IMR-90 (cell line): ENCODE measurements at regions of chr10 and their contacts with region 1.

Region 1: DNA sequence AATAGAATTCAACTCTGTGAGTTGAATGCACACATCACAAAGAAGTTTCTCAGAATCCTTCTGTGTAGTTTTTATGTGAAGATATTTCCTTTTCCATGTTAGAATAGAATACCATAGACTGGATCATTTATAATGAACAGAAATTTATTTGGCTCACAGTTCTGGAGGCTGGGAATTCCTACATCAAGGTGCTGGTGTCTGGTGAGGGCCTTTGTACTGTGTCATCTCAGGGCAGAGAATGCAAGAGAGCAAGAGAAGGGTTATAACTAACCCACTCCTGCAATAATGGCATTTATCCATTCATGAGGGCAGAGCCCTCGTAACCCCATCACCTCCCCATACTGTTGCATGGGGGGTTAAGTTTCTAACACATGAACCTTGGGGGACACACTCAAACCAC is 18.4 kb upstream of the DIP2C start:
- DNase-seq: no peak
- ATAC-seq: no peak
- H3K4me3 ChIP-seq: no peak overlapping the region
- H3K27ac ChIP-seq: no peak overlapping the region
- H3K4me1 ChIP-seq: no peaks in the 10 kb centered on the region
- H3K27me3 ChIP-seq: peaks cover 29% of the 10 kb centered on the region
- CTCF ChIP-seq: no peak
- POLR2A ChIP-seq: no peak
- RAD21 ChIP-seq: no peak

Region 2: GRCh38 chr10:561721-562120 is 146.1 kb before region 1 on chr10:
- CTCF ChIA-PET with region 1: no interaction called
- POLR2A ChIA-PET with region 1: interaction called, 11 read pairs
- dilution Hi-C with region 1: no loop called
- in situ Hi-C with region 1: no loop called
- intact Hi-C with region 1: no loop called
- DNase-seq: no peak
- ATAC-seq: no peak
- H3K4me3 ChIP-seq: no peak overlapping the region
- H3K27ac ChIP-seq: no peak overlapping the region
- H3K4me1 ChIP-seq: peaks cover 11% of the 10 kb centered on the region; the same call in 1 of the 2 replicates
- H3K27me3 ChIP-seq: no peaks in the 10 kb centered on the region
- CTCF ChIP-seq: no peak
- POLR2A ChIP-seq: no peak
- RAD21 ChIP-seq: no peak

Region 3: GRCh38 chr10:677038-677437 is 30.8 kb before region 1 on chr10:
- CTCF ChIA-PET with region 1: no interaction called
- POLR2A ChIA-PET with region 1: no interaction called
- dilution Hi-C with region 1: no loop called
- in situ Hi-C with region 1: no loop called
- intact Hi-C with region 1: no loop called
- DNase-seq: no peak
- ATAC-seq: peak; percentile 15; the same call in 1 of the 2 replicates
- H3K4me3 ChIP-seq: no peak overlapping the region
- H3K27ac ChIP-seq: no peak overlapping the region
- H3K4me1 ChIP-seq: peaks cover 14% of the 10 kb centered on the region
- H3K27me3 ChIP-seq: no peaks in the 10 kb centered on the region
- CTCF ChIP-seq: no peak
- POLR2A ChIP-seq: no peak
- RAD21 ChIP-seq: no peak

Region 4: DNA sequence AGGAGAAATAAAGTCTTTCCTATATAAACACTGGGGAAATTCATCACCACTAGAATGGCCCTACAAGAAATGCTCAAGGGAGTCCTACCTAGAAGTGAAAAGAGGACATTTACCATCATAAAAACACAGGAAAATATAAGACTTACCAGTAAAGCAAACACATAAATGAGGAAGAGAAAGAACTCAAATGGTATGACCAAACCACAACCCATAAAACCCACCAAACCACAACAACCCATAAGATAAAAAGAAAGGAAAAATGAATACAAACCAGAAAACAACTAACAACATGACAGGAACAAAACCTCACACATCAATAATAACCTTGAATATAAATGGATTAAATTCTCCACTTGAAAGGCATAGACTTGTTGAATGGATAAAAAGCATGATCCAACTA is 53.5 kb after region 1 on chr10:
- CTCF ChIA-PET with region 1: no interaction called
- POLR2A ChIA-PET with region 1: no interaction called
- dilution Hi-C with region 1: no loop called
- in situ Hi-C with region 1: no loop called
- intact Hi-C with region 1: loop called (anchors 5 kb)
- DNase-seq: no peak
- ATAC-seq: no peak
- H3K4me3 ChIP-seq: no peak overlapping the region
- H3K27ac ChIP-seq: no peak overlapping the region
- H3K4me1 ChIP-seq: no peaks in the 10 kb centered on the region
- H3K27me3 ChIP-seq: peaks cover 4% of the 10 kb centered on the region
- CTCF ChIP-seq: no peak
- POLR2A ChIP-seq: no peak
- RAD21 ChIP-seq: no peak